CD4-positive, alpha-beta T cell (primary cell): ENCODE measurements at regions of chr4 and their contacts with region 1.

Region 1: DNA sequence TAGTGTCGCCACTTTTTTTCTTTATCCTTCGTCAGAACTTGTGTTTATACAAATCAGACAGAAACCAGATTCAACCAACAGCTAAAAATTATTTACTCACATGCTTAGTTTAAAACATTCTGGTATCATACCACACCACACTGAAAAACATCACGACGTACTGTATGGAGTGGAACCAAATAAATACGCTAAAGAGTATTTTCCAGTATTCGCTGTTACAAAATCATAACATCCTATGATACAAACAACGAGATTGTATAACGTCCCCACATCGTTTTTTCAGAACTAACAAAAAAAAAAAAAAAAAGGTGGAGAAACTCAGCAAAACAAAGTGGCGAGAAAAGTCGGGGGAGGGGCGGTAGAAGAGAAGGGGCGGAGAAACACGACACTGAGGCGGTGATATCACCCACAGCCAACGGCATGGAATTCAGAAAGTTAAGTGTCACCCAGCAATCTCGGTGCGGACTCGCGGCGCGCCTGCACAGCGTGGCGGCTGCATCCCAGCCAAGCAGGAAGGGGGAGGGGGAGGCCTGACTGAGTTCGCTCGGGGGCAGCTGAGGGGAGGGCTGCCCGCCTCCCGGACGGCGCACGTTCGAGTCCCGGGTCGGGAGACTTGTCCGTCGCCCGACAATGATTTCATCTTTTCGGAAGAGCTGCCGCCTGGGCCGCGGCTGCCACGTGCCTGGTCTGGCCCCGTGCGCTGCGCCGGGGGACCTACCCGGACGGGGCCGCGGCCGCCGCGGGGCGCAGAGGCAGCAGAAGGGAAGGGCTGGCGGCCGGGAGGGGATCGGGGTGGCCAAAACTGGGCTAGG is 920 bp downstream of the SETD7 start:
- DNase-seq: peak; percentile 72 to 94 (median 84)
- ATAC-seq: peak; percentile 78
- H3K4me3 ChIP-seq: peak overlapping the region; percentile 96
- H3K4me3 Mint-ChIP-seq: peak overlapping the region; percentile 95
- H3K27ac ChIP-seq: peak overlapping the region; percentile 40 to 74
- H3K27ac Mint-ChIP-seq: peak overlapping the region; percentile 95
- H3K4me1 ChIP-seq: peaks cover 40% of the 10 kb centered on the region
- H3K4me1 Mint-ChIP-seq: peaks cover 67% of the 10 kb centered on the region
- H3K27me3 ChIP-seq: no peaks in the 10 kb centered on the region
- H3K27me3 Mint-ChIP-seq: peaks cover 9% of the 10 kb centered on the region
- CTCF ChIP-seq: no peak

Region 2: DNA sequence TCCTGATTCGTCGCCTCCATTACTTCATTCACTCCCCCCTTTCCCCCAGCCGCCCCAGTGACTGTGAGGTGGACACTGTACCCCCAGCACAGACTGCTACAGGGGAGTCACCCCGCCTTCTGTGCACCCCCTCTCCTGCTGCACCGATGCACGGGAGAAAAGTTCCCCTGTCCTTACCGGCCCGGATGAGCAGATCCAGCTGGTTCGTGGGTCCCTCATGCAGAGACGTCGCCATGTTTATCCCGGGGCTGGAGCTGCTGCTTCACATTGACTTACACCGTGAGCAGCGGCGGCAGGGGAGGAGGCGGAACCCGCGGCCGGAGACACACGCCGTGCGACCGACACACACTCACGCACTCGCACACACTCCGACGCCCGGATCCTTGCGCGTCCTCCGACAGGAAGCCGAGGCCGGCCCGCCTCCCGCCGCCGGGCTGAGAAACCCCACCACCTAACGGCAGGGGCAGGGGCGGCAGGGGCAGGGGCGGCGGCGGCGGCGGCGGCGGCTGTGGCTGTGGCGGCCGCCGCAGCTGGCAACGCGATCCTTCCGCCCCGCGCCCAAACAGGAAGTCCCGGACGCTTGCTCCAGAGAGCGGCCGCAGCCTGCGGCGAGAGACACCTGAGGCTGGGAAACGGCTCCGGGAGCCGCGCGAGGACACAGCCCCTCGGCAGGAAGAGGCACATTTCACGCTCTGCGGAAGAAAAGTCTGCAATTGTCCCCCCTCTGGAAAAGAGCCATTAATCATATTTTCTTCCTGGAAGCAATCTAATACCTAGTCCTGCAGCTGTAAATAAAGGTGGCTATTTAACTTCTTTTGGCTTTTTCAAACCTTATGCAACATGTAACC is 470.9 kb before region 1 on chr4:
- CTCF ChIA-PET with region 1: no interaction called
- POLR2A ChIA-PET with region 1: interaction called, 31 read pairs
- intact Hi-C with region 1: loop called in 1 of 2 experiments (anchors 5 kb)
- DNase-seq: peak; percentile 65 to 94 (median 80)
- ATAC-seq: peak; percentile 44
- H3K4me3 ChIP-seq: peak overlapping the region; percentile 93
- H3K4me3 Mint-ChIP-seq: peak overlapping the region; percentile 93
- H3K27ac ChIP-seq: peak overlapping the region; percentile 94 to 96
- H3K27ac Mint-ChIP-seq: peak overlapping the region; percentile 92
- H3K4me1 ChIP-seq: peaks cover 5% of the 10 kb centered on the region
- H3K4me1 Mint-ChIP-seq: peaks cover 55% of the 10 kb centered on the region
- H3K27me3 ChIP-seq: no peaks in the 10 kb centered on the region
- H3K27me3 Mint-ChIP-seq: no peaks in the 10 kb centered on the region
- CTCF ChIP-seq: no peak

Region 3: DNA sequence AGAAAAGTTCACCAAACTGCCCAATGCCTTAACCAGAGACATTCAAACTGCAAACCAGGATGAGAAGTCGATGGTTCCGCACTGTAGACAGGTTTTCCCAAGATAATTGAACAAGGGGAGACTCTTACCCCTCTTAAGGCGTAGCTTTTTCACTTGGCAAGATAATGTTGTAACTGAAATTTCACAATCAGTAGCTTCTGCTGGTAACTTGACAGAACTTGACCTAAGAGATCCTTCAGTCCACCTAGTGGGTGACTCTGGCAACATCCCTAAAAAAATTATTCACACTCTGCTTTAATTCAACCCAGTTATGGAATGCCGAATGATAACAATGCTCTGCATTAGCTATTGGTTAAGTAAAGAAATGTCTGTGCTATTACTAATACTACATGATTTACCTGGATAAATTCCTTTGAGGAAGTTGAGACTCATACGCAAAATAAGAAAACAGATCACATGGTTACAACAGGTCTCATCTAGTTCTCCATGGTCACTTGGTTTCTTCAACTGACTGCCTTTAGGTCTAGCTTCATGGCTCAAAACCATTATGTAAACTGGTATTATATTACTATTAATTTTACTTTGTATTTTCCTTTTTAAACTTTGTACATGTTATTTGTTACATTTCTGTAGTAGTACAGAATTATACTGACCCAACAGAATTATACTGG is 387.2 kb before region 1 on chr4:
- CTCF ChIA-PET with region 1: no interaction called
- POLR2A ChIA-PET with region 1: no interaction called
- intact Hi-C with region 1: no loop called
- DNase-seq: peak in 3 of 14 experiments; percentile 9 to 43 (median 34)
- ATAC-seq: no peak
- H3K4me3 ChIP-seq: no peak overlapping the region
- H3K4me3 Mint-ChIP-seq: no peak overlapping the region
- H3K27ac ChIP-seq: no peak overlapping the region
- H3K27ac Mint-ChIP-seq: no peak overlapping the region
- H3K4me1 ChIP-seq: no peaks in the 10 kb centered on the region
- H3K4me1 Mint-ChIP-seq: peaks cover 9% of the 10 kb centered on the region
- H3K27me3 ChIP-seq: no peaks in the 10 kb centered on the region
- H3K27me3 Mint-ChIP-seq: no peaks in the 10 kb centered on the region
- CTCF ChIP-seq: no peak

Region 4: GRCh38 chr4:139301113-139301820 is 253.8 kb before region 1 on chr4 and contains the start of gene NAA15:
- CTCF ChIA-PET with region 1: no interaction called
- POLR2A ChIA-PET with region 1: interaction called, 43 read pairs
- intact Hi-C with region 1: loop called (anchors 1 to 5 kb)
- DNase-seq: peak; percentile 95 to 99 (median 96)
- ATAC-seq: peak; percentile 86
- H3K4me3 ChIP-seq: peak within 1 kb of the TSS; percentile 91
- H3K4me3 Mint-ChIP-seq: peak within 1 kb of the TSS; percentile 95
- H3K27ac ChIP-seq: peak within 1 kb of the TSS; percentile 97 to 98
- H3K27ac Mint-ChIP-seq: peak within 1 kb of the TSS; percentile 94
- H3K4me1 ChIP-seq: peaks cover 26% of the 10 kb centered on the region
- H3K4me1 Mint-ChIP-seq: peaks cover 67% of the 10 kb centered on the region
- H3K27me3 ChIP-seq: no peaks in the 10 kb centered on the region
- H3K27me3 Mint-ChIP-seq: no peaks in the 10 kb centered on the region
- CTCF ChIP-seq: no peak
- total RNA-seq, gene NAA15: 54.2 to 57.1 TPM

Region 5: DNA sequence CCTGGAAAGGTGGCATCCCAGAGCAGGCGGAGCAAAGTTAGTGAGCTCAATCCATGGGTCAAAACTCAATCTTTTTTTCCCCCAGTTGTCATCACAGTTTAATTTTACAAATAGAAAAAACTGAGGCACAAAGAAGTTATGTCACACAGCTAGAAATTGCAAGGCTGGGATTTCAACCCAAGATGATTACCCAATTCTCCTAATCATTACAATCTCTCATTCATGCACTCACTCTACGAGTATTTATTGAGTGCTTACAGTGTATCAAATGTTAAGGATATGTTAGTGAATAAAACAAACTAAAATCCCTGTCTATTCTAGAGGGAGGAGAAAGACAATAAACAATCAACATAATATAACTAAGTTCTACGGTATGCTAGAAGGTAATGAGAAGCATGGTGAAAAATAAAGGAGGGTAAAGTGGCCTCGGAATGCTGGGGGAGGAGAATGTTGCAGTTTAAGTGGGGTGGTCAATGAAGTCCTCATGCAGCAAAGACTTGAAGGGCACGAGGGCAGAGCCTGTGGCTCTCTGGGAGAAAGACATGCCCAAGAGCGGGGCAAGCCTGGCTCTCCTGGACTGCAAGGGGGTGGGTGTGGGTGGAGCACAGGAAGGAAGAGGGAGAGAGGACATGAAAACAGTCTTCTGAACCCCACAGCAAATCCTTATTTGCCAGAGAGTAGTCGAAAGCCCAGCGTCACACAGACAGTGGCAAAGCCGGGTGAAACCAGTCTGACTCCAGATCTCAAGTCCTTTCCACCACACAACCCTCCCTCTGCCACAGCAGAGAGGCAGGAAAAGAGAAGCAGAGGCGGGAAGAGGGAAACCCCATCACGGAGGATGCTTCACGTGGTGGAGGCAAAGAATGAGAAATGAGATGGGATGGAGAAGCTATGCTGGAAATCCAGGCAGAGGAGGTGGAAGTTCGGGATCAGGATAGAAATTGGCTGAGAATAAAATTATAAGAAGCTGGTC is 52.9 kb before region 1 on chr4:
- CTCF ChIA-PET with region 1: interaction called, 6 read pairs
- POLR2A ChIA-PET with region 1: interaction called, 3 read pairs
- intact Hi-C with region 1: loop called in 1 of 2 experiments (anchors 5 kb)
- DNase-seq: no peak
- ATAC-seq: no peak
- H3K4me3 ChIP-seq: no peak overlapping the region
- H3K4me3 Mint-ChIP-seq: no peak overlapping the region
- H3K27ac ChIP-seq: no peak overlapping the region
- H3K27ac Mint-ChIP-seq: no peak overlapping the region
- H3K4me1 ChIP-seq: peaks cover 3% of the 10 kb centered on the region
- H3K4me1 Mint-ChIP-seq: no peaks in the 10 kb centered on the region
- H3K27me3 ChIP-seq: no peaks in the 10 kb centered on the region
- H3K27me3 Mint-ChIP-seq: no peaks in the 10 kb centered on the region
- CTCF ChIP-seq: no peak

Region 6: DNA sequence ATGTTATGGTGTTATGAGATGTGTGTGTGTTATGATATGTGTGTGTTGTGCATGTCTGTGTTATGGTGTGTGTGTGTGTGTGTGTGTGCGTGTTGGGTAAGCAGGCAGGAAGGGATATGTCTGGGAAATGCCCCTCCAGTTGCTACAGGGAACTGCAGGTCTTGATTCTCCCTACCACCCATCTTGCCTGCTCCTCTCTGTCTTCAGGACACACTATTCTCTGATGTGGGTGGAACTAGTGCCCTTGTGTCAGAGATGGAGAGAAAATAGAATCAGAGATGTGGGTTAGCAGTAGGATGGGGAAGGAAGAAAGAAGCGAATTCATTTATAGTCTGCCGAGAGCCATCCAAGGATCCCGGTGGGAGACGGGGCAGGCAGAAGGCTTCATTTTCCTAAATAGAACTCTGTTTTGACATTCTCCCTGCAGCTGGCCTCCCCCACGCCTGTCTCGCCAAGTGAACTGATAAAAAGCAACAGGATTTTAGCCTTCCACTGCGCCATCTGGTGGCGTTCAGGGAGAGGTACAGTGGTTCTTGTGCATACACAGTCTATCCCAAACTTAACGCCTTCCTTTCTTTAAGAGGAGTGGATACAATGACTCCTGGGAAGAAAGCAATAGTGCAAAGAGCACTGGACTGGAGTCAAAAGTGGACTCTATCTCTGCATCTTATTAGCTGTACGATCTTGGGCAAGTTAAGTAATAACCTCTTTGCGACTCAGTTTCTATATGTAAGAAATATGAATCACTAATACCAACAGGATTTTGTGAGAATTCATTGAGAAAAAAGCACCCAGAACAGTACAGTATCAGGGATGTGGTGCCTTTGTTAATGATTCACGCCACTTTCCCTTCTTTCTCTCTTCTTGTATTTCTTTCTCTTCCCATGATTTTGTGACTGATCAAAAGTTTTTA is 96.4 kb after region 1 on chr4:
- CTCF ChIA-PET with region 1: interaction called, 4 read pairs
- POLR2A ChIA-PET with region 1: interaction called, 5 read pairs
- intact Hi-C with region 1: loop called in 1 of 2 experiments (anchors 5 kb)
- DNase-seq: peak; percentile 52 to 87 (median 59)
- ATAC-seq: peak; percentile 92
- H3K4me3 ChIP-seq: no peak overlapping the region
- H3K4me3 Mint-ChIP-seq: no peak overlapping the region
- H3K27ac ChIP-seq: no peak overlapping the region
- H3K27ac Mint-ChIP-seq: no peak overlapping the region
- H3K4me1 ChIP-seq: peaks cover 5% of the 10 kb centered on the region
- H3K4me1 Mint-ChIP-seq: peaks cover 6% of the 10 kb centered on the region
- H3K27me3 ChIP-seq: peaks cover 0 to 5% of the 10 kb centered on the region in 2 experiments
- H3K27me3 Mint-ChIP-seq: peaks cover 4% of the 10 kb centered on the region
- CTCF ChIP-seq: peak; percentile 95

Region 7: DNA sequence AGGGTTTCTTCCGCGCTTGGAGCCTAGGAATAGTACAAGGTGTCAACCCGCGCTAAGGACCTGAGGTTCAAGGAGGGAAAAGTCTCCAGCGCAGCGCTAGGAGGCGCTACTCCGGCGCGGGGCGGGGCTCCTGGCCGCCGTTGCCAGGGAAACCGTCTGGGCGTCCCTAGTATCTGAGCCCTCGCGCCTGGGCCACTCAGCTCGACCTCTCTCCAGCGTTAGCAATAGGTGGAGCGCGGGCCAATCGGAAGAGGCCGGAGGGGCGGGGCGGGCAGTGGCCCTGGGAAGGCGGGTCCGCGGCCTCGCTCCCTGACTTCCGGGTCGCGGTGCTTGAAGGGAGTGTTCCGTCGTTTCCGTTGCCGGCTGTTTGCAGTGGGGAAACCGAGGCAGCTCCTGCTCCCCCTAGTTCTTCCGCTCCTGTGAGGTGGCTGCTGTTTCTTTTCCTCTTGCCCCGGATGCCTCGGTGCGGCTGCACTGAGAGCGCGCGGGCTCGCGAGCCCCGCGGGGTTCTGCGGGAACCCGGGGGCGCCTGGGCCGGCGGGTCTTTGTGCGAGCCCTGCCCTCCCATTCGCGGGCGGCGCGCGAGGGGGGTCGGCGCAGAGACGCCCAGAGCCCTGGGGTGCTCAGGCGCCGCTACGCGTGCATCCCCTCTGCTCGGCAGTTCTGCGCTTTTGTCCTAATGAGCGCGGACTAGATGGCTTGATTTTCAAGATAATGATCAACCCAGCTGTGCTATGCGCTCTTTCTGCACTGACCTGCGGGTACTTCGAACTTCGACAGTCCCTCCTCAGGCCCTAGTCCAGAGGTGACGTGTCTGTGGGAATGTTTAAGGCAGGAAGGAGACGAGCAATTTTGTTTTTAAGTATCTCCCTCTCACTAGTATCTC is 969.0 kb after region 1 on chr4 and contains the start of gene ELMOD2:
- CTCF ChIA-PET with region 1: interaction called, 3 read pairs
- POLR2A ChIA-PET with region 1: interaction called, 3 read pairs
- intact Hi-C with region 1: loop called in 1 of 2 experiments (anchors 10 kb)
- DNase-seq: peak; percentile 93 to 99 (median 96)
- ATAC-seq: peak; percentile 99
- H3K4me3 ChIP-seq: peak within 1 kb of the TSS; percentile 65
- H3K4me3 Mint-ChIP-seq: peak within 1 kb of the TSS; percentile 91
- H3K27ac ChIP-seq: peak within 1 kb of the TSS in 1 of 2 donors; percentile 58
- H3K27ac Mint-ChIP-seq: peak within 1 kb of the TSS; percentile 79
- H3K4me1 ChIP-seq: peaks cover 10% of the 10 kb centered on the region
- H3K4me1 Mint-ChIP-seq: peaks cover 26% of the 10 kb centered on the region
- H3K27me3 ChIP-seq: no peaks in the 10 kb centered on the region
- H3K27me3 Mint-ChIP-seq: no peaks in the 10 kb centered on the region
- CTCF ChIP-seq: peak; percentile 82
- total RNA-seq, gene ELMOD2: 12.3 to 14.9 TPM